ENCODE measurements at regions of chr11 and their contacts with region 1.

Region 1: GRCh38 chr11:112440518-112440917 is 179.9 kb upstream of the PLET1 start:
- DNase-seq: peak; percentile 74
- H3K4me3 ChIP-seq: no peak overlapping the region
- H3K27ac ChIP-seq: no peak overlapping the region
- H3K4me1 ChIP-seq: no peaks in the 10 kb centered on the region
- H3K27me3 ChIP-seq: no peaks in the 10 kb centered on the region
- CTCF ChIP-seq: peak; percentile 81

Region 2: DNA sequence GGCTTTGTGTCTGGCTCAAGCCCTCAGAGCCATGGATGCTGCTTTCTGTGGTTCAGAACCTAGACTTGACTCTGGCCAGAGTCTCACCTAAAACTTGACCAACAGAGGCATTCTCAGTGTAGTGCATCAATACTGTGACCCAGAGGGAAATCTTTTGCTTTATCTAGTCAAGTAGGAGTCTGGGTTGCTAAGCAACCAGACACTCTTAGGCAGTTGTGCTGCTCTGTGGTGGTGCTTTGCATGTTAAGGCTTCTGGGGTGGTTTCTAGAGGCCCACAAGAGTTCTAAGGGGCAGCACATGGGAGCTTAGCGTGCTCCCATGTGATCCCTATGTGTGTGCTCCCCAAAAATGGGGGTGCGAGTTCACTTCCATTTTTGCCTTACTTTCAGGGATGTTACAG is 44.8 kb after region 1 on chr11:
- CTCF ChIA-PET with region 1: no interaction called
- POLR2A ChIA-PET with region 1: no interaction called
- intact Hi-C with region 1: no loop called
- DNase-seq: no peak
- H3K4me3 ChIP-seq: no peak overlapping the region
- H3K27ac ChIP-seq: no peak overlapping the region
- H3K4me1 ChIP-seq: peaks cover 7% of the 10 kb centered on the region
- H3K27me3 ChIP-seq: no peaks in the 10 kb centered on the region
- CTCF ChIP-seq: no peak

Region 3: DNA sequence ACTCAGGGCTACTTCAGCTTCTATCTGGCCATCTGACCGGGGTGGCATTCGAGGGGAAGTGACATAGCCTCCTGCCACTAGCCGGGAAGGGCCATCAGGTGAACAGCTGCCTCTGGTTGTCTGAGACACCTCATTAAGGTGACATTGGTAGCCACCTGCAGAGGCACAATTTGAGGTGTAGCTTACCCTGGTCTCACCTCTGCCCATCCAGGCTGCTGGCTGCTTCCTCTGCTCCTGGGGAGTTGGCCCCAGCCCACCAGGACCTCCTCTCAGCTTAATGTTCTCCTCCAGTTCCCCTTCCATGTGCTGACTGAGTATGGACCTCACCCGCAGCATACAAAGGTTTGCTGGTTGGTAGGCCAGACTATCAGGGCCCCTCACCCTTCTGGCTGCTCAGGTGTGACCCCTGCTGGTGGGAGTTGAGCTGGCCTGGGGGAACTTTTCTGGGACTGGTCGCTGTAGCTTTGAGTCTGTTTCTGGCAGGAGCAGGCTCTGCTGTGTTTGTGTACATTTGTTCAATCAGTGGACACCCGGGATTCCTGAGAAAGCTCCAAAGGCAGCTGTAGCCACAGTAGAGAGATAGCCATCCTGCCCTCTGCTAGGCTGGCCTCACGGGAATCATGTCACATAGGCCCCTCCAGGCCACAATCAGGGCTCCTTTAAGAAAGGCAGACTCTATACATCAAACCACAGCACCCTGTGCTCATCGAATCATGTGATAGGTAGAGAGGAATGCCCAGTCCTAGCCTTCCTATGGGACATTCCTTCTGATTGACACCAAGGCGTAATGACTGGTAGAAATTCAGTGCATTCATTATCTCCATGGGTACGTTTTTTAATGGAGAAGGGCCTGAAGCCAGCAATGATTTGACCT is 115.2 kb after region 1 on chr11:
- CTCF ChIA-PET with region 1: interaction called, 21 read pairs
- POLR2A ChIA-PET with region 1: no interaction called
- intact Hi-C with region 1: loop called (anchors 1 kb)
- DNase-seq: peak; percentile 89
- H3K4me3 ChIP-seq: no peak overlapping the region
- H3K27ac ChIP-seq: no peak overlapping the region
- H3K4me1 ChIP-seq: peaks cover 22% of the 10 kb centered on the region
- H3K27me3 ChIP-seq: no peaks in the 10 kb centered on the region
- CTCF ChIP-seq: peak; percentile 97

Region 4: GRCh38 chr11:112795142-112795815 is 354.8 kb after region 1 on chr11:
- CTCF ChIA-PET with region 1: interaction called, 8 read pairs
- POLR2A ChIA-PET with region 1: no interaction called
- intact Hi-C with region 1: loop called (anchors 5 kb)
- DNase-seq: peak; percentile 81
- H3K4me3 ChIP-seq: no peak overlapping the region
- H3K27ac ChIP-seq: no peak overlapping the region
- H3K4me1 ChIP-seq: no peaks in the 10 kb centered on the region
- H3K27me3 ChIP-seq: no peaks in the 10 kb centered on the region
- CTCF ChIP-seq: peak; percentile 81

Region 5: GRCh38 chr11:113113801-113114706 is 673.5 kb after region 1 on chr11:
- CTCF ChIA-PET with region 1: interaction called, 3 read pairs
- POLR2A ChIA-PET with region 1: interaction called, 4 read pairs
- intact Hi-C with region 1: loop called (anchors 5 kb)
- DNase-seq: peak; percentile 77
- H3K4me3 ChIP-seq: no peak overlapping the region
- H3K27ac ChIP-seq: no peak overlapping the region
- H3K4me1 ChIP-seq: no peaks in the 10 kb centered on the region
- H3K27me3 ChIP-seq: no peaks in the 10 kb centered on the region
- CTCF ChIP-seq: peak; percentile 86

Measured in A673 (cell line).